Caco-2 (cell line): ENCODE measurements at regions of chr7 and their contacts with region 1.

Region 1: DNA sequence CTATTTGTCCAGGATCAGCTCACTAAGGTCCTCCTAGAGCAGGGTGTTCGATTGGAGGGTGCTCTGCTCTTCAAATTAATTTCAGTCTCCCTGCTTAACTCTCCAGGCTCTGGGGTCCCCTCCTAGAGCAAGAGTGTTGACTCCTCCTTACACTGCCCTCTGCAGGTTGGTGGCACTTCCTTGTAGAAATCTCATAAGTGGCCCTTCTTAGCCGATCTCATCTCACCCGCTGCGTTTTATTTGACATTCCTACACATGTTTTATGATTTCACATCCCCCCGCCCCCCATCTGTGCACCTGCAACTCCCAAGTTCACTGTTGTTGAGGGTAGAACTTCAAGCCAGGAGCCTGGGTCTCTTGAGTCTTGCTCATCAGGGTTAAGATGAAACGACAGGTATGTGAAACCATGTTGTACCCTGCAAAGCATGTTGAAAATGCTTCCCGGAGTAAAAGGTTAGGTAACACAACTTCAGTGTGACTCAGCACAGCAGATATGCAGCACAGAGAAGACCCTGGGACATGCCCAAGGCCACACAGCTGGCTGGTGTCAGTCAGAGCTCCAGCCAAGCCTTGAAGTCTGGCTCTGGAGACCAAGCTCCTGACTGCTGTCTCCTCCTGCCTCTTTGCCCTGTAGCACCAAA is 171.2 kb downstream of the PRKAG2 start:
- DNase-seq: peak in 1 of 2 experiments; percentile 58
- H3K4me3 ChIP-seq: no peak overlapping the region
- H3K4me3 Mint-ChIP-seq: no peak overlapping the region
- H3K27ac Mint-ChIP-seq: no peak overlapping the region
- H3K4me1 ChIP-seq: peaks cover 12% of the 10 kb centered on the region; the same call in 1 of the 2 replicates
- H3K4me1 Mint-ChIP-seq: peaks cover 7% of the 10 kb centered on the region
- H3K27me3 ChIP-seq: no peaks in the 10 kb centered on the region
- H3K27me3 Mint-ChIP-seq: no peaks in the 10 kb centered on the region
- CTCF ChIP-seq: peak; percentile 65 to 77

Region 2: DNA sequence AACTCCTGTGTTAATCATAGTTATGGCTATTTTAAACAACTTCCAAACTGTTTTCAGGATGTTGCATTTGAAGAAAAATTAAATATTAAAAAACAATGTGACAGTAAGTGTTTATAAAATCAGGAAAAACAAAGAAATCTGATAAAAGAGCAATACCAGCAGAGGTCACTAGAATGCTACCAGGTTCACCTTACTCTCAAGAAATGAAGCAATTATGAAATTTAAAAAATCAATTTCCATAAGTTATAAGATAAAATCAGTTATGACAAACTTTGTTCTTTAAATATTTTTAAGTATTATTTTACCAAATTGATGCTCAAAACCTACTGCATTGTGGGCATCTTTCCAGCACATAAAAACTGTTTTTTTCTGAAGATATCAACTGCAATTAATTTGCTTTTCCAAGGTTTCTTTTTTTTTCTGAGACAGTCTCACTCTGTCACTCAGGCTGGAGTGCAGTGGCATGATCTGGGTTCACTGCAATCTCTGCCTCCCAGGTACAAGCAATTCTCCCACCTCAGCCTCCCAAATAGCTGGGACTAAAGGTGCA is 135.3 kb before region 1 on chr7:
- CTCF ChIA-PET with region 1: no interaction called
- POLR2A ChIA-PET with region 1: no interaction called
- intact Hi-C with region 1: loop called (anchors 5 kb)
- DNase-seq: no peak
- H3K4me3 ChIP-seq: no peak overlapping the region
- H3K4me3 Mint-ChIP-seq: no peak overlapping the region
- H3K27ac Mint-ChIP-seq: no peak overlapping the region
- H3K4me1 ChIP-seq: no peaks in the 10 kb centered on the region
- H3K4me1 Mint-ChIP-seq: no peaks in the 10 kb centered on the region
- H3K27me3 ChIP-seq: no peaks in the 10 kb centered on the region
- H3K27me3 Mint-ChIP-seq: no peaks in the 10 kb centered on the region
- CTCF ChIP-seq: peak; percentile 14 to 26

Region 3: GRCh38 chr7:151626422-151627115 is 79.2 kb before region 1 on chr7:
- CTCF ChIA-PET with region 1: no interaction called
- POLR2A ChIA-PET with region 1: no interaction called
- intact Hi-C with region 1: loop called (anchors 1 kb)
- DNase-seq: peak; percentile 51 to 55
- H3K4me3 ChIP-seq: no peak overlapping the region
- H3K4me3 Mint-ChIP-seq: no peak overlapping the region
- H3K27ac Mint-ChIP-seq: no peak overlapping the region
- H3K4me1 ChIP-seq: peaks cover 11% of the 10 kb centered on the region
- H3K4me1 Mint-ChIP-seq: peaks cover 6% of the 10 kb centered on the region
- H3K27me3 ChIP-seq: no peaks in the 10 kb centered on the region
- H3K27me3 Mint-ChIP-seq: no peaks in the 10 kb centered on the region
- CTCF ChIP-seq: peak; percentile 39 to 63